ENCODE measurements at regions of chr10 and their contacts with region 1.

Region 1: GRCh38 chr10:114876602-114877300 is 55.2 kb downstream of the FHIP2A start:
- DNase-seq: no peak
- H3K4me3 ChIP-seq: no peak overlapping the region
- H3K27me3 ChIP-seq: no peaks in the 10 kb centered on the region; the same call in 1 of the 2 replicates
- CTCF ChIP-seq: peak; percentile 88

Region 2: DNA sequence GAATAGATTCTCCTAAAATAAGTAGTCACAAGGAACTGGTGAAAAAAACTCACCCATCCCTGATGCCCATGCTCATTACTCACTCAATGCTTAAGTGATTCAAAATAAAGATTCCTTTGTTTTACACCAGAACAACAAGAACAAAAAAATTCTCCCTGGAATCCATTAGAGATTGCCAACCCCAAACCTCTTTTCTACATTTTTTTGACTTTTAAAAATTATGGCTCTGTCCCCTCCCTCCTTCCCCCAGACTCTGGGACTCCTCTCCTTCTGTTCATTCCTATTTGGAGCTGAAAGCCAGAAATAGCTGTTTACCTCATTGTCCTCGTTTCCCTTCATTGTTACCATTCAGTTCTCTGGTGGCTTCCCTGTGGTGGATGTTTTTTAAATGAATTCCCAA is 118.4 kb before region 1 on chr10:
- CTCF ChIA-PET with region 1: no interaction called
- POLR2A ChIA-PET with region 1: no interaction called
- DNase-seq: no peak
- H3K4me3 ChIP-seq: no peak overlapping the region
- H3K27me3 ChIP-seq: no peaks in the 10 kb centered on the region
- CTCF ChIP-seq: no peak

Region 3: DNA sequence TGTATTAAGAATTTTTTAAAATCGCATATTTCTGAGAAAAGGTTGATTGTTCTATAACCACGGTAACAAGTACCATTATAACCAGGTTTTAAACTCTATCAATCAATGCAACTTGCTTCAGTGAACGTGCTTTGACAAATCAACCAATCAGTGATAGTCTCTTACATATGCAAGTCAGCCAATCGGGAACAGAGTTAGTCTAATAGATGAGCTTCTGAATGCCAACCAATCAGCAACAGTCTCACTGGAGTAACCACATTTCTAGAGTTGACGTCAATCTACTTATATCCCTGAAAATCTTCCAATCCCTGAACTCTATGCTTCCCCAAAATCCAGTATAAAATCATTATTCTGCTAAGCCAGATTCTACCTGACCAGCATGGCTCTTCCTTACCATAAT is 16.5 kb after region 1 on chr10:
- CTCF ChIA-PET with region 1: interaction called, 12 read pairs
- POLR2A ChIA-PET with region 1: no interaction called
- DNase-seq: no peak
- H3K4me3 ChIP-seq: no peak overlapping the region
- H3K27me3 ChIP-seq: no peaks in the 10 kb centered on the region
- CTCF ChIP-seq: no peak

Region 4: GRCh38 chr10:114902151-114902550 is 25.4 kb after region 1 on chr10:
- CTCF ChIA-PET with region 1: interaction called, 10 read pairs
- POLR2A ChIA-PET with region 1: no interaction called
- DNase-seq: peak; percentile 39
- H3K4me3 ChIP-seq: no peak overlapping the region
- H3K27me3 ChIP-seq: no peaks in the 10 kb centered on the region
- CTCF ChIP-seq: no peak

Region 5: DNA sequence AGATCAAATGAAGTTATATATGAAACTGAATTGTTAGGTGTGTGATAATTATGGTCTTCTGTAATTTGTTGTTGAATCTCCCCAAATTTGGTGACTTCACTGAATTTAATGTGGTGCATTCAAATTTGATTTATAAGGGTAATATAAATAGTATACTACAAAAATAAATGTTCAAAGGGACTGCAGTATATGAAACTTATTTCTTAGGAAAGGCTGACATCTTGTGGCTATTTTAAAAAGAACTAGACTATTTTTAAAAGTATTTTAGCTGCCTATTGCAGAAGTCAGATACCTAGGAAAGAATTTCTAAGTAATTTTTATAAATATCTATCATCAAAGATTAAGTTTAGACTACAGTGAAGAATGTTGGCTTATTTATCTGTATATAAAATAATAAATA is 253.0 kb after region 1 on chr10:
- CTCF ChIA-PET with region 1: interaction called, 43 read pairs
- POLR2A ChIA-PET with region 1: no interaction called
- DNase-seq: no peak
- H3K4me3 ChIP-seq: no peak overlapping the region
- H3K27me3 ChIP-seq: no peaks in the 10 kb centered on the region
- CTCF ChIP-seq: no peak

Measured in BJ (cell line).